MCF 10A (cell line): ENCODE measurements at regions of chr1 and their contacts with region 1.

Region 1: DNA sequence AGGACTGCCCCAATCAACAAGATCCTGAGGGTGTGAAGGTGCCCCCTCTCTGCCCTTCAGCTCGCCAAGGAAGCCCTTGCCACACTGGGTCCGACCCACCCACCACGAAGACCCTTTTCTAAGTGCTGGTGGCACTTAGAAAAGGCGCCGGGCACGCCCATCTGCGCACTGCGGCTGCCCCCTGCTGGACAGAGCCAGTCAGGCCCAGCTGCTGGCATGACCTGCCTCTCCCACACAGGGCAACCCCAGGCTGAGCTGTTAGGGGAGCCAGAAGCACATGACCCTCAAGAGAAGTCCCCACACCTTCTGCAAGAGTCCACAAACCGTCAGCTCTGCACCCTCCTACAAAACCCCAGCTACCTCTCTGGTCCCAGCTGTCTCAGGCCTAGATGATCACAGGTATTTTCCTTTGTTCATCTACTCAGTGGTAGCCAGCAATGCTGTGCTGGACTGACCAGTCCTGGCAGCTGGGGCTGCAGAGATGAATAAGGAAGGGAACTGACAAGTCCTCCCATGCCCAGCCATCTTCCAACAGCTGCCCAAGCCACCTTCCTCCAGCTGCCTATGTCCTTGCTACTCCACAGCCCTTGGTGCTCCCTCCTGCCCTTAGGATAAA is 40.0 kb upstream of the ZC3H12A start:
- DNase-seq: peak; percentile 62
- H3K4me3 Mint-ChIP-seq: no peak overlapping the region
- H3K27ac Mint-ChIP-seq: no peak overlapping the region
- H3K4me1 Mint-ChIP-seq: no peaks in the 10 kb centered on the region
- H3K27me3 Mint-ChIP-seq: peaks cover 48% of the 10 kb centered on the region
- CTCF ChIP-seq: peak; percentile 94

Region 2: GRCh38 chr1:36516372-36517325 is 917.8 kb before region 1 on chr1:
- CTCF ChIA-PET with region 1: interaction called, 46 read pairs
- POLR2A ChIA-PET with region 1: interaction called, 4 read pairs
- intact Hi-C with region 1: no loop called
- DNase-seq: peak; percentile 73
- H3K4me3 Mint-ChIP-seq: no peak overlapping the region
- H3K27ac Mint-ChIP-seq: no peak overlapping the region
- H3K4me1 Mint-ChIP-seq: peaks cover 7% of the 10 kb centered on the region
- H3K27me3 Mint-ChIP-seq: no peaks in the 10 kb centered on the region
- CTCF ChIP-seq: peak; percentile 90

Region 3: GRCh38 chr1:36576118-36576517 is 858.3 kb before region 1 on chr1:
- CTCF ChIA-PET with region 1: interaction called, 75 read pairs
- POLR2A ChIA-PET with region 1: no interaction called
- intact Hi-C with region 1: loop called (anchors 1 kb)
- DNase-seq: peak; percentile 51
- H3K4me3 Mint-ChIP-seq: no peak overlapping the region
- H3K27ac Mint-ChIP-seq: no peak overlapping the region
- H3K4me1 Mint-ChIP-seq: no peaks in the 10 kb centered on the region
- H3K27me3 Mint-ChIP-seq: peaks cover 43% of the 10 kb centered on the region
- CTCF ChIP-seq: peak; percentile 84

Region 4: GRCh38 chr1:37410815-37411214 is 23.6 kb before region 1 on chr1:
- CTCF ChIA-PET with region 1: interaction called, 10 read pairs
- POLR2A ChIA-PET with region 1: no interaction called
- intact Hi-C with region 1: no loop called
- DNase-seq: peak; percentile 49
- H3K4me3 Mint-ChIP-seq: no peak overlapping the region
- H3K27ac Mint-ChIP-seq: no peak overlapping the region
- H3K4me1 Mint-ChIP-seq: no peaks in the 10 kb centered on the region
- H3K27me3 Mint-ChIP-seq: peaks cover 11% of the 10 kb centered on the region
- CTCF ChIP-seq: no peak

Region 5: DNA sequence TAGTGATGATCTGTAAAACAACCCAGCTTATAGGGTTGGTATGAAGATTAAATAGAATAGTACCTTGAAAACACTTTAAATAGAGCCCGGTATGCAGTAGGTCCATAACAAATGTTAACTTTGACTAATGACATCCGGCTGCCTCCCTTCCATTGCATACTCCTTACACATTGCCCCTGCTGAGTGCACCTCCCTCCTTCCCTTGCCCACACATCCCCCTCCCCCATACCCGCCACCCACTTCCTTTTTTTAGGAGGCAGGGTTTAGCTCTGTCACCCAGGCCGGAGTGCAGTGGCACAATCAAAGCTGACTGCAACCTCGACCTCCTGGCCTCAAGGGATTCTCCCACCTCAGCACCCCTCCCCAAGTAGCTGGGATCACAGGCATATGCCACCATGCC is 15.5 kb after region 1 on chr1:
- CTCF ChIA-PET with region 1: interaction called, 18 read pairs
- POLR2A ChIA-PET with region 1: no interaction called
- intact Hi-C with region 1: no loop called
- DNase-seq: no peak
- H3K4me3 Mint-ChIP-seq: no peak overlapping the region
- H3K27ac Mint-ChIP-seq: peak overlapping the region; percentile 54
- H3K4me1 Mint-ChIP-seq: peaks cover 12% of the 10 kb centered on the region
- H3K27me3 Mint-ChIP-seq: no peaks in the 10 kb centered on the region
- CTCF ChIP-seq: no peak